Common myeloid progenitor, CD34-positive (primary cell): ENCODE measurements at regions of chr1 and their contacts with region 1.

Region 1: GRCh38 chr1:116504308-116505156 is 66.3 kb downstream of the CD58 start:
- DNase-seq: peak; percentile 88 to 99 (median 98)
- H3K4me3 ChIP-seq: peak overlapping the region in 3 of 7 experiments; percentile 16 to 26 (median 26)
- H3K27ac ChIP-seq: peak overlapping the region; percentile 20 to 79
- H3K4me1 ChIP-seq: peaks cover 24 to 74% (median 44%) of the 10 kb centered on the region in 4 experiments
- H3K27me3 ChIP-seq: no peaks in the 10 kb centered on the region

Region 2: GRCh38 chr1:116334015-116334547 is 170.5 kb before region 1 on chr1:
- CTCF ChIA-PET with region 1: no interaction called
- POLR2A ChIA-PET with region 1: no interaction called
- DNase-seq: no peak
- H3K4me3 ChIP-seq: no peak overlapping the region
- H3K27ac ChIP-seq: no peak overlapping the region
- H3K4me1 ChIP-seq: no peaks in the 10 kb centered on the region
- H3K27me3 ChIP-seq: peaks cover 0 to 1% (median 0%) of the 10 kb centered on the region in 5 experiments

Region 3: DNA sequence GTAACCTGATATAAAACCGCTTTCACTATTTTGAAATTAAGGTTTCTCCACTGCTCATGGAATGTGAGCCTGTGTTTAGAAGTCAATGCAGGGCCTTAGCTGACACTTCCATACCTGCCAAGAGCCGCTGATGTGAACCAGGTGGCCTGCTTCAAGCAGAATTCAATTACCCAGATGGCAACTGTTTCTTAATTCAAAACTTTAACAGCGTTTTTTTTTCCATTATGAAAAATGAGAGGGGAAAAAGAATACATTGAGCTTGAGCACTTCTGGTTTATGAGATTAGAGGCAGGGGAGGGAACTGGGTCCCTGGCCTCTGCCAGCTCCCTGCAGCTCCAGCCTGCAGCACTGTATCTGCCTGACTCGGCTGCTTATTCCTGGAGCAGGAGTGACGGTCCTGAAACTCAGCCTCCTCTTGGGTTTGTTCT is 139.2 kb before region 1 on chr1:
- CTCF ChIA-PET with region 1: no interaction called
- POLR2A ChIA-PET with region 1: no interaction called
- DNase-seq: no peak
- H3K4me3 ChIP-seq: no peak overlapping the region
- H3K27ac ChIP-seq: no peak overlapping the region
- H3K4me1 ChIP-seq: no peaks in the 10 kb centered on the region
- H3K27me3 ChIP-seq: peaks cover 0 to 4% (median 0%) of the 10 kb centered on the region in 5 experiments

Region 4: GRCh38 chr1:116538544-116538943 is 34.0 kb after region 1 on chr1:
- CTCF ChIA-PET with region 1: interaction called, 14 read pairs
- POLR2A ChIA-PET with region 1: no interaction called
- DNase-seq: peak in 2 of 3 donors; percentile 40 to 57
- H3K4me3 ChIP-seq: no peak overlapping the region
- H3K27ac ChIP-seq: peak overlapping the region in 1 of 2 experiments; percentile 21
- H3K4me1 ChIP-seq: peaks cover 8 to 33% (median 24%) of the 10 kb centered on the region in 4 experiments
- H3K27me3 ChIP-seq: no peaks in the 10 kb centered on the region